Caco-2 (cell line): ENCODE measurements at regions of chr19 and their contacts with region 1.

Region 1: DNA sequence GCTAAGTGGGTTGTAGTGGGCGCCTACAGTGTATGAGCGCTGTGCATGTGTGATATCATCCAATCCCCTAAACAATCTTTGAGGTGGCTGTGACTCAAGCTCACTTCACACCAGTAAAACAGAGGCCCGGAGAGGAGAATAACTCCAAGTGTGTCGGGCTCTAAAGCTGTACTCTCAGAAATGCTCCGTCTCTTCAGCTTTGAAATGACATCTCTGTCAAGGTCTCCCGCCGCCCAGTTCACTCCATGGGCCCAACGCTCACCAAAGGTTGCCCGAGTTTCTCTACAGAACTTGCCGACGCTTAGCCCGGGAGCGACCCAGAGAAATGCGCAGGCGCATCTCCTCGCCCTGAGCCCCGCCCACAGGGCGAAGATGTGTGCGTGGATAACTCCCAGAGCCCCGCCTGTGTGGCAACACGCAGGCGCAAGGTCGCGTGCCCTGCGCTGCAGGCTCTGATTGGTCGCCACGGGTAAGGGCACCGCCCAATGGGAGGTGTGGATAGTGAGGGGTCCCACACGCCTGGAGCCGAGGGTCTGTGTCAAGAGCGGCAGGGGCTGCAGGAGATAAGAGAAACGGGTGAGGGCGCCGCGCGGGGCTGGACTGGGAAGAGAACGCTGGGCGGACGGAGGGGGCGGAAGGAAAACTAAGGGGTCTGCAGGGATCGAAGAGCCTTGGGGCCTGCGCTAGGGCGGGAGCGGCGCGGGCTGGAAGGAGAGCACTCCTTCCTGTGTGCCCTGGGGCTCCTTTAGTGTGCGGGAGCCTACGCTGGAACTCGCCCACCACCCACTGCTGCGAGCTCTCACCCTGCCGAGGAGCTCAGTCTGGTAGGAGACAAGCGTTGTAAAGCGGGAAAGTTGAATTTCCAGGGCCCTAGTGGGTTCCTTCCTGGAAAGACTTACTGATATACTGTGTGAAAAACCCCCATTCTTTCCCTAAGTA is at the start of gene ZNF526:
- DNase-seq: peak; percentile 99
- H3K4me3 ChIP-seq: peak within 1 kb of the TSS; percentile 79
- H3K4me3 Mint-ChIP-seq: peak within 1 kb of the TSS; percentile 93
- H3K27ac Mint-ChIP-seq: peak within 1 kb of the TSS; percentile 94
- H3K4me1 ChIP-seq: peaks cover 25% of the 10 kb centered on the region
- H3K4me1 Mint-ChIP-seq: peaks cover 22% of the 10 kb centered on the region
- H3K27me3 ChIP-seq: no peaks in the 10 kb centered on the region
- H3K27me3 Mint-ChIP-seq: no peaks in the 10 kb centered on the region
- CTCF ChIP-seq: peak in 1 of 2 experiments; percentile 2
- total RNA-seq, gene ZNF526: 19.4 and 22.6 TPM in 2 replicates

Region 2: DNA sequence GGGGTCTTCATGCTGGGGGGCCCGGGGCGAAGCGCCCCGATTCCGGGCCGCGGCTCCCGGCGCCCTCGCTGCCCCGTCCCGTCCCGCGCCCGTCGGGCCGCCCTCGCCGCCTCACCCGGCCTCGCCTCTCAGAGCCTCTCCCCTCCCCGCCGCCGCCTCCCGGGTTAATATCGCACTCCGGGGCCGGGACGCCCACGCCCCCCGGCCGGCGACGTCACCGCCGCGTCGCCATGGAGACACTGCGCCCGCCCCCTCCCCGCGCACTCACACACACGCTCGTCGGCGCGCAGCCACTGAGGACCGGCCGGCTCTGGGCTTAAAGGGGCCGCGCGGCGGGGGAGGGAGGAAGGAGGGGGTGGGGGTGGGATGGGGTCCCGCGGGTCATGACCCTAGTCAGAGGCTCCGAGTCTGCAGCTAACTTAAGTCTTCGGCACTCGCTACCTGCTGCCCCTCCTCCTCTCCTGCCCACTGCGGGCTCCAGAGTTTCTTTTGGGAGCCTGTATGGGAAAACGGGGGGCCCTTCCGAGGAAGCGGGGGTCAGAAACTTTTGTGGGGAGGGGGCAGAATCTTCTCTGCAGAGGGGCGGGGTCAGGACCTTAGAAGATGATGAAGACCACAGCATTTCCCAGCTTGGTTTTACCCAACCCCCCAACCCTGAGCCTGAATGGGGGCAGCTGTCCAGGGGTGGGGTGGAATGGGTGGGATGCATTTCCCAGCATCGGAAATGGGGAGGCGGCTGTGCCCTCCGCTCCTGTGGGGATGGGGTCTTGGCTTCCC is 35.1 kb after region 1 on chr19 and contains the start of gene ERF:
- CTCF ChIA-PET with region 1: no interaction called
- POLR2A ChIA-PET with region 1: no interaction called
- intact Hi-C with region 1: loop called (anchors 1 kb)
- DNase-seq: peak; percentile 93 to 97
- H3K4me3 ChIP-seq: peak within 1 kb of the TSS; percentile 74
- H3K4me3 Mint-ChIP-seq: peak within 1 kb of the TSS; percentile 87
- H3K27ac Mint-ChIP-seq: peak within 1 kb of the TSS; percentile 89
- H3K4me1 ChIP-seq: peaks cover 21% of the 10 kb centered on the region
- H3K4me1 Mint-ChIP-seq: peaks cover 21% of the 10 kb centered on the region
- H3K27me3 ChIP-seq: no peaks in the 10 kb centered on the region
- H3K27me3 Mint-ChIP-seq: no peaks in the 10 kb centered on the region
- CTCF ChIP-seq: no peak
- total RNA-seq, gene ERF: 134 and 149 TPM in 2 replicates

Region 3: GRCh38 chr19:42283143-42284065 is 63.3 kb after region 1 on chr19:
- CTCF ChIA-PET with region 1: no interaction called
- POLR2A ChIA-PET with region 1: no interaction called
- intact Hi-C with region 1: loop called (anchors 2 kb)
- DNase-seq: peak; percentile 95 to 98
- H3K4me3 ChIP-seq: peak overlapping the region; percentile 79
- H3K4me3 Mint-ChIP-seq: no peak overlapping the region
- H3K27ac Mint-ChIP-seq: no peak overlapping the region
- H3K4me1 ChIP-seq: peaks cover 40% of the 10 kb centered on the region
- H3K4me1 Mint-ChIP-seq: peaks cover 29% of the 10 kb centered on the region
- H3K27me3 ChIP-seq: no peaks in the 10 kb centered on the region
- H3K27me3 Mint-ChIP-seq: no peaks in the 10 kb centered on the region
- CTCF ChIP-seq: no peak

Region 4: GRCh38 chr19:42313096-42313839 is 93.2 kb after region 1 on chr19 and contains the start of gene TMEM145:
- CTCF ChIA-PET with region 1: no interaction called
- POLR2A ChIA-PET with region 1: no interaction called
- intact Hi-C with region 1: no loop called
- DNase-seq: peak; percentile 62 to 83
- H3K4me3 ChIP-seq: peak within 1 kb of the TSS; percentile 48
- H3K4me3 Mint-ChIP-seq: peak within 1 kb of the TSS; percentile 66
- H3K27ac Mint-ChIP-seq: no peak within 1 kb of the TSS
- H3K4me1 ChIP-seq: 0 out of 2 replicates have a peak, but pooled peaks cover 5% of the 10 kb centered on the region
- H3K4me1 Mint-ChIP-seq: no peaks in the 10 kb centered on the region
- H3K27me3 ChIP-seq: no peaks in the 10 kb centered on the region
- H3K27me3 Mint-ChIP-seq: peaks cover 11% of the 10 kb centered on the region
- CTCF ChIP-seq: peak in 1 of 2 experiments; percentile 14
- total RNA-seq, gene TMEM145: 2.2 and 2.5 TPM in 2 replicates

Region 5: GRCh38 chr19:42403586-42403985 is 183.5 kb after region 1 on chr19:
- CTCF ChIA-PET with region 1: no interaction called
- POLR2A ChIA-PET with region 1: no interaction called
- intact Hi-C with region 1: no loop called
- DNase-seq: no peak
- H3K4me3 ChIP-seq: no peak overlapping the region
- H3K4me3 Mint-ChIP-seq: no peak overlapping the region
- H3K27ac Mint-ChIP-seq: no peak overlapping the region
- H3K4me1 ChIP-seq: no peaks in the 10 kb centered on the region
- H3K4me1 Mint-ChIP-seq: peaks cover 8% of the 10 kb centered on the region
- H3K27me3 ChIP-seq: no peaks in the 10 kb centered on the region
- H3K27me3 Mint-ChIP-seq: no peaks in the 10 kb centered on the region
- CTCF ChIP-seq: no peak